Left cardiac atrium (tissue), 4 donors: ENCODE measurements at regions of chr7 and their contacts with region 1.

Region 1: GRCh38 chr7:28853834-28854749 is 104.0 kb downstream of the TRIL start:
- DNase-seq: peak; percentile 81
- ATAC-seq: peak; percentile 97 to 98

Region 2: DNA sequence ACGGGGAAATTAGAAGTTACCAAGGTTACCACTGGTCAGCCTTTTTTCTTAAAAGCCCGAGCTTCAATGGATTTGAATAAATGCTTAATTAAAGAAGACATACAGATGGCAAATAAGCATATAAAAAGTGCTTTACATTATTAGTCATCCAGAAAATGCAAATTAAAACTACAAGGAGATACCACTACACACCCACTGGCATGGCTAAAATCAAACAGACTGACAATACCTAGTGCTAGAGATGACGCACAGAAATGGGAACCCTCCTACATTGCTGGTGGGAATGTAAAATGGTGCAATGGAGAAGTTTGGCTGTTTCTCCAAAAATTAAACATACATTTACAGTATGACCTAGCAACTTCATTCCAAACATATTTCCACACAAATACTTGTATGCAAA is 480.1 kb before region 1 on chr7:
- intact Hi-C with region 1: no loop called
- DNase-seq: no peak
- ATAC-seq: no peak

Region 3: GRCh38 chr7:28389504-28390395 is 464.3 kb before region 1 on chr7:
- intact Hi-C with region 1: loop called (anchors 2 to 5 kb)
- DNase-seq: no peak
- ATAC-seq: peak; percentile 19 to 45

Region 4: DNA sequence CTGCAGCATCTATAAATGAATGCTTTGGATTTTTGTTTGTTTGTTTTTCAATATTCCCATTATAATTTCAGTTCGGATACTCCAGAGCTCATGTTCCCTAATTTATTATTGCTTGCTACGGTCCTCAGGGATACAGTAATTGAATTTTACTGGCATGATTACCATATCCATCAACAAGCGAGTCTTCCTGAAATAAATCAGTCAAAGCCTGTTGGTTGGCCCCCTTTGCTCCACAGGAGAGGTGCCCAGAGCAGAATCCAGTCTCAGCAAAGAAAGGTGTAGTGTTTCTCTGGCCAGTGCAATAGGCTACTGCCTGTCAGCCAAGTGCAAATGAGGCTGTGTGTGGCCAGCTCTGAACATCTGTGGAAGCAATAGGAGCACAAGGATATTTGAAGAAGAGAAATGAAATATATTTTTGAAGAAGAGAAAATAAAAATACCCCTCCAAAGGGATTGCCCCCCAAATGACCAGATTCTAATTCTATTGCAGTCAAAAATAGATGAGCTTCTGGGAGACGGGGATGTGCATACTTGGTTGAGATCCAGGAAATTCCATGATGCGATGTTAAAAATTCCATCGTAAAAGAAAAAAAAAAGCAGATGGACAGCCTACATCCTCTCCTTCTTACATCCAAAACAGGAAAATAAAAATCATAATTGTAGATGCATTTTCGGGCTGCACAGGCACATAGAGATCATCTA is 85.9 kb after region 1 on chr7:
- intact Hi-C with region 1: no loop called
- DNase-seq: no peak
- ATAC-seq: no peak

Region 5: DNA sequence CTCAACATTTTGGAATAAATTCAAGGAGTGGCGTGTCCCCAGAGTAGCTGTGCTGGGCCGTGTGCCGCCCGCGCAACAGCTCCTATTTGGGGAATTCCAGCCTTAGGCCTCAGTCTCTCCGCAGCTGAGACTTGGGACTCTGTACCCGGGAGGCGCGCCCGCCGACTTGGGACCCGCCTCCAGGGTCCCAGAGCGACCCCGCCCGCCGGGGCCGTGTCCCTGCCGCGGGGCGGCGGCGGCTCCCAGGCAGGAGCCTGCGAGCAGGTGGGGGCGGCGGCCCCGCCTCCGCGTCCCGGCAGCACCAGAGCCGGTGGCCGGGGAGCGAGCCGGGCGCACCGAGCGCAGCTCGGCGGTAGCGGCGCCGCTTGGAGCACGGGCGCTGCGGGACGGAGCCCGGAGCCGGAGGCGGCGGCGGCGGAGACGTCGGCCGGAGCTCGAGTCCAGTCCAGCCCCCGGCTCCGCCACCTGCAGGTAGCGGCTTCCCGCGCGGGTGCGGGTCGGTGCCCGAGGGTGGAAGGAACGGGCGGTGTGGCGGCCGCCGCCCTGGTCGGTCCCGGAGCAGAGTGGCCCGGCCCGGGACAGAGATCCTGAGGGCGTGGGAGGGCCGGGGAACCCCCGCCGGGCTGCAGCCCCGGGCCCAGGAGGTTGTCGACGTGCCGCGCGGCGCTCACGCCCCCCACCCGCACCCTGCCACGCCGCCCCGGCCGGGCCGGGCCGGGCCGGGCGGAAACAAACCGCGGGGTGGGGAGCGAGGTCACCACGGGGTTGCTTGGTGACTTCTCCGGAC is 952.3 kb after region 1 on chr7 and contains the start of gene WIPF3:
- intact Hi-C with region 1: no loop called
- DNase-seq: peak; percentile 39
- ATAC-seq: peak; percentile 77 to 78
- total RNA-seq, gene WIPF3: 1.8 to 3.8 TPM